ENCODE measurements at regions of chr2 and their contacts with region 1.

Region 1: DNA sequence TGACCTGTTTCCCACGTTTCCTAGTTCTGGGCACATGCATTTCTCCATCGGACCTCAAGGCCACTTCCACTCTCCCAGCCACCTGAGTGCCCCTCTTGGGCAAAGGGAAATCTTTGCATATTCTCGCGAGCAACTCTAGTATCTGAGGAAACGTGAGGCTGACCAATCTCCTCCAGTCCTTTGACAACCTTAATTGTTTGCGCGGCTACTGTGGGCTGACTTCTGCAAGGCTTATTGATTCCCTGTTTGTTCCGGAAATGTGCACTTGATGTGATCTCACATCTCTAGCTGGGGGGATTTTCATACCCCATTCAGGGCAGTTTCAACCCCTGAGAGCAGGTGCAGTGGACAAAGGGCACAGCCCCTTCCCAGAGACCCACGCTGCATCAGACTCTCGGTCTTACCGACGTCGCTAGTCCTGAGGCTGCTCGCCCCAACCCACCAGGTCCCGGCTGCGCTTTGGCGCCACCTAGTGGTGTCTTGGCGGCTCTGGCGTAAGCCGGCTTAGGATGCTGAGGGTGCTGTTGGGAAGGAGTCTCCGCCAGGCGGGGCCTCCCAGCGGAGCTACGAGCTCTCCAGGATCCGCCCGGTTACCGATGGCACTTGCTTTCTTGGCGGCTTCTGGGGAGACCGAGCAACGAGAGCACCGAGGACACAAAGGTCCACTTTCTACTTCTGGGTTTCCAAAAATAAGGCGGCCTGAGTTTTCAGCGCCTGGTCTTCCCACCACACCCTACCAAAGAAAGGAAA is 24.8 kb upstream of the SPR start:
- DNase-seq: peak; percentile 90
- ATAC-seq: peak; percentile 98 to 99

Region 2: GRCh38 chr2:72770879-72771461 is 91.4 kb before region 1 on chr2:
- intact Hi-C with region 1: loop called (anchors 2 kb)
- DNase-seq: no peak
- ATAC-seq: peak; percentile 54 to 59

Measured in left cardiac atrium (tissue), 4 donors.